Heart right ventricle (tissue), 16 donors: ENCODE measurements at regions of chr22 and their contacts with region 1.

Region 1: DNA sequence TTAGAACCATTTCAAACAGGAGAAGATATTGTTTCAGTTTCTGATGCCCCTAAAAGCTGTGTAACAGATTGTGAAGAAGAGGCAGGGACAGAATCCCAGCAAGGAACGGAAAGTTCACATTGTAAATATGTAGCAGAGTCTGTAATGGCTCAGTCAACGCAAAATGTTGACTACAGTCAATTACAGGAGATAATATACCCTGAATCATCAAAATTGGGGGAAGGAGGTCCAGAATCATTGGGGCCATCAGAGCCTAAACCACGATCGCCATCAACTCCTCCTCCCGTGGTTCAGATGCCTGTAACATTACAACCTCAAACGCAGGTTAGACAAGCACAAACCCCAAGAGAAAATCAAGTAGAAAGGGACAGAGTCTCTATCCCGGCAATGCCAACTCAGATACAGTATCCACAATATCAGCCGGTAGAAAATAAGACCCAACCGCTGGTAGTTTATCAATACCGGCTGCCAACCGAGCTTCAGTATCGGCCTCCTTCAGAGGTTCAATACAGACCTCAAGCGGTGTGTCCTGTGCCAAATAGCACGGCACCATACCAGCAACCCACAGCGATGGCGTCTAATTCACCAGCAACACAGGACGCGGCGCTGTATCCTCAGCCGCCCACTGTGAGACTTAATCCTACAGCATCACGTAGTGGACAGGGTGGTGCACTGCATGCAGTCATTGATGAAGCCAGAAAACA is 40.8 kb downstream of the IGLL1 start:
- DNase-seq: peak; percentile 69 to 78
- ATAC-seq: peak; percentile 92 to 98 (median 97)
- H3K4me3 ChIP-seq: peak overlapping the region in 2 of 10 donors; percentile 14 to 33
- H3K27ac ChIP-seq: peak overlapping the region in 1 of 10 donors; percentile 63
- H3K4me1 ChIP-seq: peaks cover 0 to 7% (median 0%) of the 10 kb centered on the region in 9 donors
- H3K27me3 ChIP-seq: peaks cover 0 to 3% (median 0%) of the 10 kb centered on the region in 7 donors
- CTCF ChIP-seq: peak; percentile 82 to 89 (median 86)

Region 2: DNA sequence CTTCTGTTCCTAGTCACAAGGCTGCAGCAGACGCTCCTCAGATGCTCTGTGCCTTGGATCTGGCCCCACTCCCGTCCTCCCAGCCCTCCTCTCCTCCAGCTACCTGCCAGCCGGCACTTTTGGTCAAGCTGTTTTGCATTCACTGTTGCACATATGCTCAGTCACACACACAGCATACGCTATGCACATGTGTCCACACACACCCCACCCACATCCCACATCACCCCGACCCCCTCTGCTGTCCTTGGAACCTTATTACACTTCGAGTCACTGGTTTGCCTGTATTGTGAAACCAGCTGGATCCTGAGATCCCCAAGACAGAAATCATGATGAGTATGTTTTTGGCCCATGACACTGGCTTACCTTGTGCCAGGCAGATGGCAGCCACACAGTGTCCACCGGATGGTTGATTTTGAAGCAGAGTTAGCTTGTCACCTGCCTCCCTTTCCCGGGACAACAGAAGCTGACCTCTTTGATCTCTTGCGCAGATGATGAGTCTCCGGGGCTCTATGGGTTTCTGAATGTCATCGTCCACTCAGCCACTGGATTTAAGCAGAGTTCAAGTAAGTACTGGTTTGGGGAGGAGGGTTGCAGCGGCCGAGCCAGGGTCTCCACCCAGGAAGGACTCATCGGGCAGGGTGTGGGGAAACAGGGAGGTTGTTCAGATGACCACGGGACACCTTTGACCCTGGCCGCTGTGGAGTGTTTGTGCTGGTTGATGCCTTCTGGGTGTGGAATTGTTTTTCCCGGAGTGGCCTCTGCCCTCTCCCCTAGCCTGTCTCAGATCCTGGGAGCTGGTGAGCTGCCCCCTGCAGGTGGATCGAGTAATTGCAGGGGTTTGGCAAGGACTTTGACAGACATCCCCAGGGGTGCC is 249.2 kb before region 1 on chr22:
- intact Hi-C with region 1: loop called in 1 of 10 experiments (anchors 10 kb)
- DNase-seq: peak; percentile 35 to 62
- ATAC-seq: peak; percentile 27 to 73 (median 54)
- H3K4me3 ChIP-seq: no peak overlapping the region
- H3K27ac ChIP-seq: no peak overlapping the region
- H3K4me1 ChIP-seq: peaks cover 0 to 13% (median 5%) of the 10 kb centered on the region in 9 donors
- H3K27me3 ChIP-seq: no peaks in the 10 kb centered on the region
- CTCF ChIP-seq: peak; percentile 68 to 80 (median 73)

Region 3: DNA sequence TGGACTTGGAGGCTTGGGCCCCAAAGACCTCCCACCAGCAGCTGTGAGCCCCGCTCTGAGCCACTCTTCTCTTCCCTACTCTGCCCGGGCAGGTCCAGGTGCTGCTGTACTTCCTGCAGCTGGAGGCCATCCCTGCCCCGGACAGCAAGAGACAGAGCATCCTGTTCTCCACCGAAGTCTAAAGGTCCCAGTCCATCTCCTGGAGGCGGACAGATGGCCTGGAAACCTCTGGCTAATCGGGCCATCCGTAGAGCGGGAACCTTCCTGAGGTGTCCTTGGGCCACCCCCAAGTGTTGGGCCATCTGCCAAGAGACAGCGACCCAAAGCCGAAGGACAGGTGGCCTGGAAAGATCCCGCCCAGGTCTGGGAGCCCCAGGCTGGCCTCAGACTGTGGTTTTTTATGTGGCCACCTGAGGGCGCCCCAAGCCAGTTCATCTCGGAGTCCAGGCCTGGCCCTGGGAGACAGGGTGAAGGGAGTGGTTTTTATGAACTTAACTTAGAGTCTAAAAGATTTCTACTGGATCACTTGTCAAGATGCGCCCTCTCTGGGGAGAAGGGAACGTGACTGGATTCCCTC is 223.9 kb before region 1 on chr22:
- intact Hi-C with region 1: loop called in 4 of 10 experiments (anchors 5 to 10 kb)
- DNase-seq: peak; percentile 43 to 77
- ATAC-seq: peak in 2 of 8 donors; percentile 17 to 75
- H3K4me3 ChIP-seq: no peak overlapping the region
- H3K27ac ChIP-seq: peak overlapping the region in 2 of 10 donors; percentile 26 to 41
- H3K4me1 ChIP-seq: peaks cover 0 to 8% (median 0%) of the 10 kb centered on the region in 9 donors
- H3K27me3 ChIP-seq: no peaks in the 10 kb centered on the region
- CTCF ChIP-seq: peak; percentile 58 to 81 (median 66)

Region 4: GRCh38 chr22:23385291-23386244 is 153.7 kb before region 1 on chr22:
- intact Hi-C with region 1: loop called in 3 of 10 experiments (anchors 2 to 5 kb)
- DNase-seq: peak; percentile 73 to 85
- ATAC-seq: peak; percentile 80 to 91 (median 85)
- H3K4me3 ChIP-seq: no peak overlapping the region
- H3K27ac ChIP-seq: no peak overlapping the region
- H3K4me1 ChIP-seq: peaks cover 0 to 7% (median 0%) of the 10 kb centered on the region in 9 donors
- H3K27me3 ChIP-seq: peaks cover 0 to 11% (median 3%) of the 10 kb centered on the region in 7 donors
- CTCF ChIP-seq: peak; percentile 96 to 100 (median 99)

Region 5: DNA sequence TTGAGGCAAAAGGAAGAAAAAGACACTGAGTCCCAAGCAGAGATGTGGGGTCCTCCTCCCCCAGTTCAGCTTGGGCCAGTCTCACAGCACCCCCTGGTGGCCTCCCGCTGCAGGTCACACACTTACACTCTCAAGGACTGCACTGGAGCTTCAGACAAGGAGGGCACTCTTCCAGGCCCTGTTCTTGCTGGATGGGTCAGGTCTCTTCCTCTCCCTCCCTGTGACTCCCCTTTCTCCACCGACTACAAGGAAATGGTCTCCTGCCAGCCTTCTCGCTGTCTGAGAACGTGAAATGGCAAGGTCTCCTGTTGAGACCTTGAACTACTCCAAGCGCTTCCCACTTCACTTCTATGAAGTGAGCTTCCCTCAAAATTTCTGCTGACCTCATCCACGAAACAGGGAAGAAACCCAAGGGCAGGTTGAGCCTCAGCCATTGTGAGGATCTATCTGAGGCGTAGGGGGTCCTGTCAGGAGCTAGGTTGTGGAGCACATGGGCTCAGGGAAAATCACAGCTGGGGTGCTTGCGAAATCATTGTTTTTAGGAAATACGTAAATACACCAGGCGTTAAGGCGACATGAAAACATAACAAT is 52.0 kb after region 1 on chr22:
- intact Hi-C with region 1: loop called in 4 of 10 experiments (anchors 5 to 10 kb)
- DNase-seq: peak; percentile 26 to 59
- ATAC-seq: peak in 5 of 8 donors; percentile 65 to 70 (median 67)
- H3K4me3 ChIP-seq: no peak overlapping the region
- H3K27ac ChIP-seq: no peak overlapping the region
- H3K4me1 ChIP-seq: no peaks in the 10 kb centered on the region
- H3K27me3 ChIP-seq: peaks cover 0 to 8% (median 0%) of the 10 kb centered on the region in 7 donors
- CTCF ChIP-seq: peak; percentile 54 to 85 (median 79)

Region 6: GRCh38 chr22:23849009-23850006 is 310.0 kb after region 1 on chr22:
- intact Hi-C with region 1: loop called in 9 of 10 experiments (anchors 5 kb)
- DNase-seq: peak; percentile 81 to 89
- ATAC-seq: peak; percentile 49 to 67 (median 60)
- H3K4me3 ChIP-seq: peak overlapping the region in 3 of 10 donors; percentile 18 to 25 (median 23)
- H3K27ac ChIP-seq: no peak overlapping the region
- H3K4me1 ChIP-seq: peaks cover 18 to 52% (median 39%) of the 10 kb centered on the region in 9 donors
- H3K27me3 ChIP-seq: peaks cover 0 to 9% (median 0%) of the 10 kb centered on the region in 7 donors
- CTCF ChIP-seq: peak; percentile 97 to 99 (median 98)